Sciatic nerve (tissue), 2 donors: ENCODE measurements at regions of chrX and their contacts with region 1.

Region 1: GRCh38 chrX:1542994-1543725 is 6.2 kb upstream of the P2RY8 start:
- DNase-seq: no peak
- ATAC-seq: no peak

Region 2: GRCh38 chrX:2654436-2655340 is 1111.5 kb after region 1 on chrX:
- intact Hi-C with region 1: no loop called
- DNase-seq: no peak
- ATAC-seq: no peak

Region 3: DNA sequence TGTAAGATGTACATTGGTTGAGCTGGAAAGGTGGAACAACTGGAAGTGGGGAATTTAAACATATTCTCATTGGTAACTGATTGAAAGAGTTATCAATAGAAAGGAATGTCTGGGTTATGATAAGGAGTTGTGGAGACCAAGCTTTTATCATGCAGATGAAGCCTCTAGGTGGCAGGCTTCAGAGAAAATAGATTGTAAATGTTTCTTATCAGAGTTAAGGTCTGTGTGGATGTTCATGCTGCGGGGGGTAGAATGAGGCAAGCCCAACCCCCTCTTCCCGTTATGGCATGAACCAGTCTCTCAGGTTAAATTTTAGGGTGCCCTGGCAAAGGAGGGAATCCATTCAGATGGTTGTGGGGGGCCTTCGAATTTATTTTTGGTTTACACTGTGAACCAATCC is 1370.0 kb after region 1 on chrX:
- intact Hi-C with region 1: loop called (anchors 5 kb)
- DNase-seq: no peak
- ATAC-seq: no peak